HCT116 (cell line): ENCODE measurements at regions of chr10 and their contacts with region 1.

Region 1: GRCh38 chr10:21495752-21496342 is 29.6 kb downstream of the SKIDA1 start:
- DNase-seq: peak; percentile 67
- ATAC-seq: peak; percentile 72
- H3K4me3 ChIP-seq: peak overlapping the region; percentile 63 to 80
- H3K27ac ChIP-seq: peak overlapping the region; percentile 83
- H3K4me1 ChIP-seq: peaks cover 2 to 20% of the 10 kb centered on the region in 2 experiments; a peak in 2 of 4 replicates
- H3K27me3 ChIP-seq: peaks cover 3% of the 10 kb centered on the region; the same call in 1 of the 2 replicates
- CTCF ChIP-seq: peak; percentile 72 to 92 (median 87)
- POLR2A ChIP-seq: peak; percentile 62
- RAD21 ChIP-seq: peak; percentile 96

Region 2: GRCh38 chr10:21292763-21293517 is 202.9 kb before region 1 on chr10:
- CTCF ChIA-PET with region 1: no interaction called
- POLR2A ChIA-PET with region 1: no interaction called
- RAD21 ChIA-PET with region 1: no interaction called
- intact Hi-C with region 1: loop called (anchors 5 kb)
- DNase-seq: peak; percentile 95
- ATAC-seq: peak; percentile 91
- H3K4me3 ChIP-seq: peak overlapping the region; percentile 9 to 32
- H3K27ac ChIP-seq: peak overlapping the region; percentile 66
- H3K4me1 ChIP-seq: peaks cover 35 to 40% of the 10 kb centered on the region in 2 experiments
- H3K27me3 ChIP-seq: no peaks in the 10 kb centered on the region
- CTCF ChIP-seq: no peak
- POLR2A ChIP-seq: no peak
- RAD21 ChIP-seq: peak; percentile 29

Region 3: DNA sequence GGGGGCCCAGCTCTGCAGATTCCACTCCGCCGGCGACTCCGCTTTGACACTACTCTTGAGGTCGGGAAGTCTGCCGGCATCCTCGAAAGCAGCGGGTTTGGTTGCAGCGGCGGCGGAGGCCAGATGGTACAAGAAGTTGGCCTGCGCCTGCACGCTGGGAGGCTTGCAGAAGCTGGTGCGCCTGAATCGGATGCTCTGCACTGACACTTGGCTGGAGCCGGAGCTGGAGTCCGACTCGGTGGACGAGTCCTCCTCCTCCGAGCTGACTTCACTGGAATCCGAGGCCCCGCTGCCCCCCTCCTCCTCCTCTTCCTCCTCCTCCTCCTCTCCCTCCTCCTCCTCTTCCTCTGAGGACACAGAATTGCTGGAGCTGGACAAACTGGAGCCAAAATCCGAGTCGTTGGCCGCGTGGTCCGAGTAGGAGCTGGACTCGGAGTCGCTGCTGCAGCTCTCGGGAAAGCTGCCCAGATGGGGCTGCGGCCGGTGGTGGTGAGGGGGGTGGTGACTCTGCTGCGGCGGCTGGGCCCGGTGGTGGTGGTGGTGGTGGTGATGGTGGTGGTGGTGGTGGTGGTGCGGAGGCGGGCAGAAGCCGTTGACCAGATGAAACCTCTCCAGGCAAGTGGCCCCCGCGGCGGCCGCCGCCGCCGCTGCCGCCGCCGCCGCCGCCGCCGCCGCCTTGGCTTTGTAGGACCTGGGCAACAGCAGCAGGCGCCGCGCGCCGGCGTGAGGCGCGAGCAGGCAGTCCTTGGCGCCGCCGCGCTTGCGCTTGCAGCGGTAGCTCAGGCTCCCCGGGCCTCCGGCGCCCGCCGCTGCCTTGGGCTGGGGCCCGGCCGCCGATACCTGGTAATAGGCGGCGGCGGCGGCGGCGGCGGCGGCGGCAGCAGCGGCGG is 20.6 kb after region 1 on chr10:
- CTCF ChIA-PET with region 1: interaction called, 6 read pairs
- POLR2A ChIA-PET with region 1: interaction called, 10 read pairs
- RAD21 ChIA-PET with region 1: no interaction called
- intact Hi-C with region 1: no loop called
- DNase-seq: no peak
- ATAC-seq: peak; percentile 67
- H3K4me3 ChIP-seq: peak overlapping the region; percentile 51 to 63
- H3K27ac ChIP-seq: peak overlapping the region; percentile 47; the same call in 1 of the 2 replicates
- H3K4me1 ChIP-seq: peaks cover 13 to 30% of the 10 kb centered on the region in 2 experiments; a peak in 3 of 4 replicates
- H3K27me3 ChIP-seq: no peaks in the 10 kb centered on the region
- CTCF ChIP-seq: no peak
- POLR2A ChIP-seq: no peak
- RAD21 ChIP-seq: no peak

Region 4: GRCh38 chr10:21525367-21526183 is 29.7 kb after region 1 on chr10 and contains the start of gene SKIDA1:
- CTCF ChIA-PET with region 1: interaction called, 5 read pairs
- POLR2A ChIA-PET with region 1: interaction called, 4 read pairs
- RAD21 ChIA-PET with region 1: interaction called in 1 of 2 experiments, 3 read pairs
- intact Hi-C with region 1: loop called (anchors 2 kb)
- DNase-seq: no peak
- ATAC-seq: peak; percentile 69
- H3K4me3 ChIP-seq: peak within 1 kb of the TSS; percentile 52 to 56
- H3K27ac ChIP-seq: peak within 1 kb of the TSS; percentile 91
- H3K4me1 ChIP-seq: peaks cover 9 to 57% of the 10 kb centered on the region in 2 experiments
- H3K27me3 ChIP-seq: no peaks in the 10 kb centered on the region
- CTCF ChIP-seq: no peak
- POLR2A ChIP-seq: no peak
- RAD21 ChIP-seq: no peak
- total RNA-seq, gene SKIDA1: 0.34 TPM

Region 5: GRCh38 chr10:21732067-21732772 is 236.4 kb after region 1 on chr10:
- CTCF ChIA-PET with region 1: interaction called, 17 read pairs
- POLR2A ChIA-PET with region 1: no interaction called
- RAD21 ChIA-PET with region 1: interaction called, 3 to 4 read pairs
- intact Hi-C with region 1: loop called (anchors 1 kb)
- DNase-seq: peak; percentile 44
- ATAC-seq: peak; percentile 95
- H3K4me3 ChIP-seq: no peak overlapping the region
- H3K27ac ChIP-seq: no peak overlapping the region
- H3K4me1 ChIP-seq: peaks cover 5 to 19% of the 10 kb centered on the region in 2 experiments
- H3K27me3 ChIP-seq: no peaks in the 10 kb centered on the region
- CTCF ChIP-seq: peak; percentile 68 to 95 (median 94)
- POLR2A ChIP-seq: no peak
- RAD21 ChIP-seq: peak; percentile 93

Region 6: GRCh38 chr10:21953585-21954057 is 457.8 kb after region 1 on chr10:
- CTCF ChIA-PET with region 1: interaction called, 16 read pairs
- POLR2A ChIA-PET with region 1: no interaction called
- RAD21 ChIA-PET with region 1: no interaction called
- intact Hi-C with region 1: loop called (anchors 1 kb)
- DNase-seq: peak; percentile 53
- ATAC-seq: peak; percentile 72
- H3K4me3 ChIP-seq: no peak overlapping the region
- H3K27ac ChIP-seq: no peak overlapping the region
- H3K4me1 ChIP-seq: peaks cover 0 to 4% of the 10 kb centered on the region in 2 experiments; a peak in 1 of 4 replicates
- H3K27me3 ChIP-seq: no peaks in the 10 kb centered on the region
- CTCF ChIP-seq: peak; percentile 25 to 61 (median 50); a peak in 4 of 6 replicates
- POLR2A ChIP-seq: no peak
- RAD21 ChIP-seq: peak; percentile 65

Region 7: DNA sequence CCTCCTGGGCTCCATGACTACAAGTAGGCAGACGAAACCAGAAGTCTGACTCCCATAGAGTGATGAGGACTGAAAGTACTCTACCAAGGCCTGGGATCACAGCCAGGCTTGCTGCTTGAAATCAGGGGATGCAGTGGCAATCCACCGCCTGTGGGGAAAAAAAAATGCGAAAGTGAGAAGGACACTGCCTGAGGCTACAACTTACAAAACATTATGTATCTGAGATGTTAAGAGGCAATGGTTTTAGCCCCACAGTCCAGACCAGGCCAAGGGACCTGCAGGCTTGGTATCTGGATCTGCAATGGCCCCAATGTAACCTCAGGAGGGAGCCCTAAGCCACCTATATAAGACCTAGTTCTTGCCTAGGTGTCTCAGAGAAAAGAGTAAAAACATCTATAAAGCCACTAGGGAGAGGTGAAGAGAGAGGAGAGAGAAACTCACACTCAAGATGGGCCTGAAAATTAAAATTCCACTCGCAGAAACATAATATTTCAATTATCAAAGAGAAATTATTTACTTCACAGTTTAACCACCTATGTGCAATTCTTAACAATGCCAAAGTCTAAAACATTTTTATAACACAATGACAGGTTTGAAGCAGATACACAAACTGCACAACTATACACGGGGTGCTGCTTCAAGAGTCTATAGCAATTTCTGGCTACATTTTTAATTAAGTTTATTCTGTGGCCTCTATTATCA is 493.8 kb after region 1 on chr10:
- CTCF ChIA-PET with region 1: interaction called, 5 read pairs
- POLR2A ChIA-PET with region 1: no interaction called
- RAD21 ChIA-PET with region 1: no interaction called
- intact Hi-C with region 1: loop called (anchors 5 kb)
- DNase-seq: peak; percentile 52
- ATAC-seq: peak; percentile 99
- H3K4me3 ChIP-seq: no peak overlapping the region
- H3K27ac ChIP-seq: no peak overlapping the region
- H3K4me1 ChIP-seq: no peaks in the 10 kb centered on the region
- H3K27me3 ChIP-seq: no peaks in the 10 kb centered on the region
- CTCF ChIP-seq: peak; percentile 50 to 71 (median 71); a peak in 5 of 6 replicates
- POLR2A ChIP-seq: no peak
- RAD21 ChIP-seq: peak; percentile 69